A673 (cell line): ENCODE measurements at regions of chr6 and their contacts with region 1.

Region 1: GRCh38 chr6:21593412-21593926 is at the start of gene SOX4:
- DNase-seq: peak; percentile 99
- H3K4me3 ChIP-seq: peak within 1 kb of the TSS; percentile 86
- H3K27ac ChIP-seq: peak within 1 kb of the TSS; percentile 89
- H3K4me1 ChIP-seq: peaks cover 15% of the 10 kb centered on the region
- H3K27me3 ChIP-seq: no peaks in the 10 kb centered on the region
- CTCF ChIP-seq: no peak
- total RNA-seq, gene SOX4: 50.7 and 59.4 TPM in 2 replicates

Region 2: DNA sequence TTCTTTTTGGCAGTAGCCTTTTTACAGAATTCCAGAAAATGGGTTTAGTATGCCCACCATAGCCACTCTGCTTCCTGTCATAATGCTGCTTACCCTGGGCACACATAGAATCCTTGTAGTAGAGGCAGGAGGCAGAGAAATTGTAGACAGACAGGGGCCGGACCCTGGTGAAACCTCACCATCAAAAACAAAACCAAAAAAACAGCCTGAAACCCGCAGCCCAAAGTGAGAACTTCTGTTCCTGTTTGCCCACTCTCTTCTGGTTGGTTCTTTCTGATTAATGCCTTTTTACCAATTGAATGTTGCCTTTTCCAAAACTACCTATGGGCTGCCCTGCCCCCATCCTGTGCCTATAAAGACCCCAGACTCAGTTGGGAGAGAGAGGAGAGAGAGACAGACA is 871.0 kb before region 1 on chr6:
- CTCF ChIA-PET with region 1: interaction called, 17 read pairs
- POLR2A ChIA-PET with region 1: no interaction called
- intact Hi-C with region 1: no loop called
- DNase-seq: no peak
- H3K4me3 ChIP-seq: no peak overlapping the region
- H3K27ac ChIP-seq: no peak overlapping the region
- H3K4me1 ChIP-seq: peaks cover 5% of the 10 kb centered on the region
- H3K27me3 ChIP-seq: no peaks in the 10 kb centered on the region
- CTCF ChIP-seq: no peak

Region 3: GRCh38 chr6:20877008-20877937 is 716.2 kb before region 1 on chr6:
- CTCF ChIA-PET with region 1: interaction called, 8 read pairs
- POLR2A ChIA-PET with region 1: interaction called, 4 read pairs
- intact Hi-C with region 1: loop called (anchors 1 kb)
- DNase-seq: peak; percentile 17
- H3K4me3 ChIP-seq: no peak overlapping the region
- H3K27ac ChIP-seq: no peak overlapping the region
- H3K4me1 ChIP-seq: peaks cover 30% of the 10 kb centered on the region
- H3K27me3 ChIP-seq: no peaks in the 10 kb centered on the region
- CTCF ChIP-seq: no peak

Region 4: DNA sequence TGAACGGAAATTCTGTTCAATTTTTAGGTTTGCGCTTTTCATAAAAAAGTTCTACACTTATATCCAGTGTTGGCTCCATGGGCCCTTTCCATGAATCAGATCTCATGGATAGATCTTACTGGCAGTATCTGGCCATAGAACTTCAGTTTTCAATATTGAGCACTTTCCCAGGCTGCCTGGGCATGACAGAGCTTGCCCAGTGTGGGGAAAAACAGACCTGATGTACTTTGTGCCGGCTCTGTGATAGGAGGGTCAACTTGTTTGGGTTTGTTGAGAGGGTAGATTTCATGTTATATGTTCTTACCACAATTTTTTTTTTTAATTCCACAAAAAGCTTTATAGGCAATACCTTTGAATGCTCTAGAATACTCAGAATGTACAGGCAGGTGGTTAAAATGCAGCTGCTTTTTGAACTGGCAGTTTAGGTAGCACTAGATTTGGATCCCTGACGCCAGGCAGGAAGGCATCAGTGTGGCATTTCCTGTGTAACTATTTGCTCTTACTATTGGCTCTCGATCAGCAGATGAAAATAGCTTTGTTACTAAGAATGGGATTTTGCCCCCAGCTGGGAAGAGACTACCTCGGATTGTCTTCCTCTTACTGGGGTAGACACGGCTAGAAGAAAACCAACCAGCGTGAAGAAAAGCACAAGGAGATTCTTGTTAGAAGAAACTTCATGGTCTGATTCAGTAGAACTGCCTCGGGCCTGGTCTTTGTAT is 404.8 kb before region 1 on chr6:
- CTCF ChIA-PET with region 1: no interaction called
- POLR2A ChIA-PET with region 1: no interaction called
- intact Hi-C with region 1: loop called (anchors 2 kb)
- DNase-seq: peak; percentile 96
- H3K4me3 ChIP-seq: no peak overlapping the region
- H3K27ac ChIP-seq: peak overlapping the region; percentile 86
- H3K4me1 ChIP-seq: peaks cover 76% of the 10 kb centered on the region
- H3K27me3 ChIP-seq: no peaks in the 10 kb centered on the region
- CTCF ChIP-seq: no peak

Region 5: DNA sequence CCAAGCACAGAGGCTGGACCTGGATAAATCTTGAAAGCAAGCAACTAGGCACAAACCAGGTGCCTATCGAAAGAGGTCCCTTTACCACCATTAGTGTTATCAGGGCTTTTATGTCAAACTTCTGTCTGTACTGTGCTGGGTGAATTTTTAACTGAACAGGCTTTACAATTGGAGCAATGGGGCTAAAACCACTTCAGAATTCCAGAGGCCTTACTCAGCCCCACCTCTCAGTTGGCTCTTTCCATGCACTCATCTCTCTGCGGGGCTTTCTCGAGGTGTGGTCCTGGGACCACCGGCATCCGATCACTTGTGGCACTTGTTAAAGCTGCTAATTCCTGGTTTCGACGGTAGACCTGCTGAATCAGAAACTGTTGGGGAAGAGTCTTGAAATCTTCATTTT is 232.6 kb after region 1 on chr6:
- CTCF ChIA-PET with region 1: no interaction called
- POLR2A ChIA-PET with region 1: interaction called, 7 read pairs
- intact Hi-C with region 1: loop called (anchors 5 kb)
- DNase-seq: no peak
- H3K4me3 ChIP-seq: no peak overlapping the region
- H3K27ac ChIP-seq: no peak overlapping the region
- H3K4me1 ChIP-seq: peaks cover 15% of the 10 kb centered on the region
- H3K27me3 ChIP-seq: peaks cover 50% of the 10 kb centered on the region
- CTCF ChIP-seq: no peak